ENCODE measurements at regions of chr3 and their contacts with region 1.

Region 1: DNA sequence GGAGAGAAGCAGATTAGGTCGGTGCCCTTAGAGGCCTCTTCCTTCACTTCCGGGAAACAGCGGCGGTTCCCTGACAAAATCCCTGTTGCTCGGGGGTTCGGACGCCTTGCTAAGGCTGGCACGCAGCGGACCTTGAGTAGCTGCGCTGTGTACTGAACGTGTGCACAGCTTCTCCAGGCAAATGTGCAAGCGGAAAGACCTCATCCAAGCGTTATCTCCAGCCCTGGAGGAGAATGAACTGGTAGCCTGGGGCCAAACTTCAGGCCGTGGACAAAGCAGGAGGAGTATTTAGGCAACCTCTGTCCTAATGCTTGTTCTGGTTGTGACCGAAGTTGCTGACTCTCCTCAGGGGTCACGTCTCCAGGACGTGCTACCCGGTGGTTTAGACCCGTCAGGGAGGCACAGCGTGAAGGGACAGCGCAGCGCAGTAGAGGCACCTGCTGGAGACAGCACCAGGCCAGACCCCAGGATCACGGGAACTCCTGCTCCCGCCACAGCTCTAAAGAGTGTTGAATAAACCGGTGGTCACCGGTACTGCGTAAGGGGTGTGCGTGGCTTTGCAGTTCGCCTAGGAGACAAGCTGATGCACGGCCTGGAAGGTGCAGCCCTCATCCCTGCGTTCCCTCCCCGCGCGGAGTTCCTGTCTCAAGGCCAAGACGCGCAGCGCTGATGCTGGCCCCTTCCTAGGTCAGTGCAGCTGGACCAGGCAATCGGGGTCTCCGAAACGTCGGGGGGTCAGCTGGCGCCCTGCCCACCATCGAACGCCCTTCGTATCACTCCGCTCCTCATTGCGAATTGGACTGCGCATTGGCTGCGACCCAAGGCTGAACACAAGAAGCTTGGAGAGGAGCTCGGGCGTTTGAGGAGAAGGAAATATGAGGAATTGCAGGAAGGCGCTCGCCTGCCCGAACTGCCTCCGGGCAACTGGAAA is 2.7 kb upstream of the SOX14 start:
- DNase-seq: no peak
- H3K4me3 Mint-ChIP-seq: no peak overlapping the region
- H3K27ac Mint-ChIP-seq: no peak overlapping the region
- H3K4me1 Mint-ChIP-seq: peaks cover 8% of the 10 kb centered on the region
- H3K27me3 Mint-ChIP-seq: peaks cover 73% of the 10 kb centered on the region

Region 2: GRCh38 chr3:137738710-137739109 is 22.8 kb before region 1 on chr3:
- CTCF ChIA-PET with region 1: no interaction called
- POLR2A ChIA-PET with region 1: no interaction called
- DNase-seq: no peak
- H3K4me3 Mint-ChIP-seq: no peak overlapping the region
- H3K27ac Mint-ChIP-seq: no peak overlapping the region
- H3K4me1 Mint-ChIP-seq: no peaks in the 10 kb centered on the region
- H3K27me3 Mint-ChIP-seq: no peaks in the 10 kb centered on the region

Region 3: DNA sequence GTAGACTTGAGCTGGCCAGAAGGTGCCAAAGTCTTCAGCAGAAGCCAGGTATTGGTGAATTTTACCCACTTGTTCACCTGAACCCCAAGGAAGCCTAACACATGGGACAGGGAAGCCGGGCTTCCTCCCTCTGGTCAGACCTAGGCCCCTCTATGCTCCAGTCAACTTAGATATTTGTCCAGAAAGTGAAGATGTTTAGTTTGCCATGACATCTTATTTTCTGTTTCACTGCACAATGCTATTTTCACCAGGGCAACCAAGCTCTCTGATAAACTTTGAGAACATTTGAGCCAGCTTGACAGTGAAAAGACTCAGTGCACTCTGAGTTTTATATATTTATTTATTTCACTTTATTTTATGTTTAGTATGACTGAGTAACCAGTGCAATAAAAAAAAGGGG is 73.6 kb after region 1 on chr3:
- CTCF ChIA-PET with region 1: no interaction called
- POLR2A ChIA-PET with region 1: interaction called, 10 read pairs
- DNase-seq: no peak
- H3K4me3 Mint-ChIP-seq: no peak overlapping the region
- H3K27ac Mint-ChIP-seq: no peak overlapping the region
- H3K4me1 Mint-ChIP-seq: no peaks in the 10 kb centered on the region
- H3K27me3 Mint-ChIP-seq: peaks cover 8% of the 10 kb centered on the region